Dendritic cell treated with granulocyte-macrophage colony-stimulating factor and Interleukin-4, amounts not matched to agents 40 ng/mL and 50 ng/mL, for 4 days (primary cell): ENCODE measurements at regions of chr16 and their contacts with region 1.

Region 1: DNA sequence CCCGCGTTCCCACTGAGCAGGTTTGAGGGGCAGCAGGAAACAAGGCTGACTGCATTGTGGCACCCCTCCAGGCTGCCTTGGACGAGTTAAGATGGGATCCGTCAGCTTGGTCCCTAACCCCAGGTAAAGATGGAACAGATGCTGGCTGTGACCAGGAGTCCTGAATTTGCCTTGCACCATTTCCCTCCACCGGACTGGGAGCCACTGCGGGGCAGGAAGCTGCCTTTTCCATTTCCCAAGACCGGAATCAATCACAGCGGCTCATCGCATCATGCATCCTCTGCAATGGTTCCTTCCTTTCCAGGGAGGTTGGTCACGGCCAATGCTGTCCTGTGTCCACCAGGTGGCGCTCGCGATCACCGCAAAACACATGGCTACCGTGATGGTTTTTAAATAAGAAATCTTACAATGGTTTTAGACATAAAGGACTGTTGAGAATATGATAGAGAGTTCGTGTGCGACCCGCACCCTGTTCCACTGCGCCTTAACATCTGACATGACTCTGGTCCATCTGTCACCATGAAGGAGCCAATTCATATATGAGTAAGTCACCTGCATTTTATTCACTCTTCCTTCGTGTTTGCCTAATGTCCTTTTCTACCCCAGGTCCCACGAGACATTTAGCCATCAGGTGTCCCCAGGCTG is 6.8 kb upstream of the MEAK7 start:
- H3K4me3 Mint-ChIP-seq: no peak overlapping the region
- H3K27ac Mint-ChIP-seq: no peak overlapping the region
- H3K4me1 Mint-ChIP-seq: peaks cover 55% of the 10 kb centered on the region
- H3K27me3 Mint-ChIP-seq: peaks cover 1% of the 10 kb centered on the region

Region 2: GRCh38 chr16:84414789-84415326 is 96.4 kb before region 1 on chr16:
- intact Hi-C with region 1: no loop called
- H3K4me3 Mint-ChIP-seq: no peak overlapping the region
- H3K27ac Mint-ChIP-seq: no peak overlapping the region
- H3K4me1 Mint-ChIP-seq: no peaks in the 10 kb centered on the region
- H3K27me3 Mint-ChIP-seq: peaks cover 19% of the 10 kb centered on the region

Region 3: GRCh38 chr16:84562174-84562815 is 51.0 kb after region 1 on chr16:
- intact Hi-C with region 1: loop called (anchors 5 kb)
- H3K4me3 Mint-ChIP-seq: no peak overlapping the region
- H3K27ac Mint-ChIP-seq: peak overlapping the region; percentile 73
- H3K4me1 Mint-ChIP-seq: peaks cover 74% of the 10 kb centered on the region
- H3K27me3 Mint-ChIP-seq: no peaks in the 10 kb centered on the region

Region 4: GRCh38 chr16:84726079-84726668 is 214.9 kb after region 1 on chr16:
- intact Hi-C with region 1: loop called (anchors 5 kb)
- H3K4me3 Mint-ChIP-seq: peak overlapping the region; percentile 59
- H3K27ac Mint-ChIP-seq: peak overlapping the region; percentile 77
- H3K4me1 Mint-ChIP-seq: peaks cover 72% of the 10 kb centered on the region
- H3K27me3 Mint-ChIP-seq: no peaks in the 10 kb centered on the region